Left cardiac atrium (tissue), 4 donors: ENCODE measurements at regions of chr4 and their contacts with region 1.

Region 1: DNA sequence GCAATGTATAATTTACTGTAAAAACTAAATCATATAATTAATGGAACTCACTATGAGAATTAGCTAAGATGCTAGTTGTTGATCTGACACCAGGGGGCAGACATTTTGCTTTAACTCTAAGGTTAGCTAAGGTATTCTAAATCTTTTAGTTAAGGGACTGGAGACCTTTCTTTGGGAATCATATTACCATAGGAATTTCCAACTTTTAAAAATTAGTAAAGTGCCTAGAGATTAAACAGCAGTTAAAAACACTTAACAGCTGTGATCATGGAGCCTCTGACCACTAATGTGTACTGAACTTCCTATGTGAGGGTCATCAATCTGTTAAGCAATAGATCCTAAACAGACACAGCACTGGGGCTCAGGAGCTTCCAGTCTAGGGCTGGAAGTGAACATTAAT is 226.6 kb downstream of the NSUN7 start:
- DNase-seq: no peak
- ATAC-seq: peak; percentile 41 to 47

Region 2: GRCh38 chr4:41044791-41045190 is 68.4 kb after region 1 on chr4:
- intact Hi-C with region 1: loop called in 1 of 2 experiments (anchors 5 kb)
- DNase-seq: no peak
- ATAC-seq: no peak